IMR-90 (cell line): ENCODE measurements at regions of chr4 and their contacts with region 1.

Region 1: GRCh38 chr4:98586962-98587354 is 71.5 kb downstream of the TSPAN5 start:
- DNase-seq: no peak
- ATAC-seq: no peak
- H3K4me3 ChIP-seq: no peak overlapping the region
- H3K27ac ChIP-seq: no peak overlapping the region
- H3K4me1 ChIP-seq: peaks cover 7% of the 10 kb centered on the region
- H3K27me3 ChIP-seq: no peaks in the 10 kb centered on the region
- CTCF ChIP-seq: no peak
- POLR2A ChIP-seq: no peak
- RAD21 ChIP-seq: no peak

Region 2: DNA sequence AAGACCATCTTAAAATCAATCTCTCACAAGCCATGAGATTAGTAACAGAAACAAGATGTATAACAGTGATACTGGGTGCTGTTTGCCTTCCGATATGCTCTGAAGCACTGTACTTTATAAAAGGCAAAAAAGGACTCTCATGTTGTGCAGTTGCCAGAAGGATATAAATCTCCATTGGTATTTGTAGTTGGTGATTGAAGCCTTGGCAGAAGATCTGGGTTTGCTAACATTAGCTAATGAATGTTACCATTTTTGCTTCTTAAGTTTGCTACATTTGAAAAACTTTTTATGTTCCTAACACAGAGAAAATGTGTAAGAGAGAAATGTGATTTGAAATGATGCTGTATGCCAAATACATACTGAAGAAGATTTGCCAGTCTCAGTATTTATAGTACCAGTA is 281.4 kb before region 1 on chr4:
- CTCF ChIA-PET with region 1: no interaction called
- POLR2A ChIA-PET with region 1: no interaction called
- dilution Hi-C with region 1: no loop called
- in situ Hi-C with region 1: no loop called
- intact Hi-C with region 1: no loop called
- DNase-seq: no peak
- ATAC-seq: no peak
- H3K4me3 ChIP-seq: no peak overlapping the region
- H3K27ac ChIP-seq: no peak overlapping the region
- H3K4me1 ChIP-seq: peaks cover 2% of the 10 kb centered on the region; the same call in 1 of the 2 replicates
- H3K27me3 ChIP-seq: no peaks in the 10 kb centered on the region
- CTCF ChIP-seq: no peak
- POLR2A ChIP-seq: no peak
- RAD21 ChIP-seq: no peak

Region 3: DNA sequence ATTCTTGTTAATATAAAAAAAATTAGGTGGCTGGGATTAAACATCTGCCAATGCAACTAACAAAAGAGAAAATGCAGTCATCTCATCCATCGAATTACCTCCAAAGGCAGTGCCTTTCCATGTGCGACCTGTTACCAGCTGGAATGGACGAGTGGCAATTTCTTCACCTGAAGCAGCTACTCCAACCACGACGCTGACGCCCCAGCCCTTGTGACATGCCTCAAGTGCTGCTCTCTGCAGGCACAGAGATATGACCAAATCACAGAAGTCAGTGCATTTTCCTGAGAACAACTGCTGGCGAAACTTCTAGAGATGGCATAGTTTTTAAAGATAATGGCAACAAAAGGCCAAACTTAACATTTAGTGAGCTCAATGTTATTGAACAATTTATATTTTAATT is 487.9 kb after region 1 on chr4:
- CTCF ChIA-PET with region 1: no interaction called
- POLR2A ChIA-PET with region 1: interaction called, 10 read pairs
- dilution Hi-C with region 1: no loop called
- in situ Hi-C with region 1: no loop called
- intact Hi-C with region 1: no loop called
- DNase-seq: no peak
- ATAC-seq: no peak
- H3K4me3 ChIP-seq: no peak overlapping the region
- H3K27ac ChIP-seq: no peak overlapping the region
- H3K4me1 ChIP-seq: no peaks in the 10 kb centered on the region; the same call in 1 of the 2 replicates
- H3K27me3 ChIP-seq: no peaks in the 10 kb centered on the region
- CTCF ChIP-seq: no peak
- POLR2A ChIP-seq: no peak
- RAD21 ChIP-seq: no peak